Activated CD4-positive, alpha-beta T cell treated with anti-CD3 and anti-CD28 coated beads, Interleukin-2, amount 10 ng/mL, durations not matched to agents 24 days and 14 days (primary cell): ENCODE measurements at regions of chr11 and their contacts with region 1.

Region 1: GRCh38 chr11:6489306-6489705 is 7.8 kb upstream of the DNHD1 start:
- DNase-seq: no peak
- H3K4me3 Mint-ChIP-seq: no peak overlapping the region
- H3K27ac Mint-ChIP-seq: no peak overlapping the region
- H3K4me1 Mint-ChIP-seq: peaks cover 2% of the 10 kb centered on the region
- H3K27me3 Mint-ChIP-seq: no peaks in the 10 kb centered on the region

Region 2: GRCh38 chr11:6523253-6523652 is 33.9 kb after region 1 on chr11:
- intact Hi-C with region 1: loop called (anchors 5 kb)
- DNase-seq: no peak
- H3K4me3 Mint-ChIP-seq: no peak overlapping the region
- H3K27ac Mint-ChIP-seq: peak overlapping the region; percentile 14
- H3K4me1 Mint-ChIP-seq: peaks cover 33% of the 10 kb centered on the region
- H3K27me3 Mint-ChIP-seq: no peaks in the 10 kb centered on the region

Region 3: DNA sequence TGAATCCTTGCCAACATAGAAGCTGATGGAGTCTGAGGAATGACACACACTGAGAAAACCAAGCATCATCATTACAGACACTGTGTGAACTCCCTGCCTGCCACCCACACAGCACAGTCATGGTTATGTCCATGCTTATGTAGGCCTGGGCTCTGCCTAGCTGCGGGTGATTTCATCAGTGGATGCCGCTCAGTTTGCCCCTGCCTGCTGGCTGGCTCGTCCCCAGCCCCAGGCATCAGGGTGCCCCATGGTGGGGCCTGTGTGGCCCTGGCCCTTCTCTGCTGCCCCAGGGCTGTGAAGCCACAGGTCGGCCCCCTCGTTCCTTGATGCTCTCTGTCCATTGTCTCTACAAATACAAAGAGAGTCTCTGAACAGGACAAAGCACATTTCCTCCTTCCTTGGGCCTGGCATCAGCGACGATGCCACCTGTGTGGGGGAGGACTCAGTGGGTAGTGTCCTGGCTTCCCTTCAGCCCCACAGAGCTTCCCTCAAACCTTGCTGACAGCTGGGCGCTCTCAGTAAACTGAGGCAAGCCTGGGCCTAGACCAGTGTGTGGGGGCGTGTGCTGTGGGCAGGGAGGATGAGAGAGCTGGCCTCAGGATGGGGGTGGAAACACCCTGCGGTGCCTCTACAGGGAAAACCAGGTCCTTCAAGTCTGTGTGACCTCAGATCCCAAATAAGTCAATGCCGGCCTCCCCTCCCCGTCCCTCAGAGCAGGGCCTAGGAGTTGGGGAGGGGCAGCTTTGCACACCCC is 1571.7 kb after region 1 on chr11:
- intact Hi-C with region 1: no loop called
- DNase-seq: no peak
- H3K4me3 Mint-ChIP-seq: no peak overlapping the region
- H3K27ac Mint-ChIP-seq: no peak overlapping the region
- H3K4me1 Mint-ChIP-seq: peaks cover 5% of the 10 kb centered on the region
- H3K27me3 Mint-ChIP-seq: no peaks in the 10 kb centered on the region